PC-3 (cell line): ENCODE measurements at regions of chr20 and their contacts with region 1.

Region 1: GRCh38 chr20:10673988-10674711 is at the start of gene JAG1:
- DNase-seq: peak; percentile 99
- ATAC-seq: peak; percentile 56
- H3K4me3 ChIP-seq: peak within 1 kb of the TSS; percentile 95
- H3K27ac ChIP-seq: peak within 1 kb of the TSS; percentile 95
- H3K4me1 ChIP-seq: peaks cover 38% of the 10 kb centered on the region
- H3K27me3 ChIP-seq: no peaks in the 10 kb centered on the region
- CTCF ChIP-seq: no peak
- total RNA-seq, gene JAG1: 176 and 184 TPM in 2 replicates

Region 2: DNA sequence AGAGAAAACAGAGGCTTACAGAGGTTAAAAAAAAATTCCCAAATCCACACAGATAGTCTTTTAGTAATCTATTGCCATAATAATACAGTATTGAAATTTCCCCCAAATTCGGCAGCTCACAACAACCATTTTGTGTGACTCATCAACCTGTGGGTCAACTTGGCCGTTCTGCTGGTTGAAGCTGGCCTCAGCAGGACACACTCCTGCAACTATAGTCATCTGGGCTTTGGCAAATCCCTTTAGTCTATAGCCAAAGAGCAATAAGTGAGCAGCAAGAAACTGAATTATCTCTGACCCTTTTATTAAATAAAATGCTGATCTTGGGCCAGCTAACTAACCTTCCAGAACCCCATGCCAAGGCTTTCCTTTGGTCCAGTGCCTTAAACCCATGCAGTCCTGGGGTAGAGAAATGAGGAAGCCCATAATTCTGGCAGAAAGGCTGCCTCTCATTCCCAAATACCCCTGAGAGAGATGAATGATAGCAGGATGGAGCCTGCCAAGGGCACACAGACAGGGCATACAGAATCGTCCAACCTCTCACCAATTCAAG is 472.8 kb before region 1 on chr20:
- CTCF ChIA-PET with region 1: no interaction called
- POLR2A ChIA-PET with region 1: no interaction called
- intact Hi-C with region 1: no loop called
- DNase-seq: no peak
- ATAC-seq: no peak
- H3K4me3 ChIP-seq: no peak overlapping the region
- H3K27ac ChIP-seq: no peak overlapping the region
- H3K4me1 ChIP-seq: no peaks in the 10 kb centered on the region
- H3K27me3 ChIP-seq: peaks cover 41% of the 10 kb centered on the region
- CTCF ChIP-seq: no peak

Region 3: DNA sequence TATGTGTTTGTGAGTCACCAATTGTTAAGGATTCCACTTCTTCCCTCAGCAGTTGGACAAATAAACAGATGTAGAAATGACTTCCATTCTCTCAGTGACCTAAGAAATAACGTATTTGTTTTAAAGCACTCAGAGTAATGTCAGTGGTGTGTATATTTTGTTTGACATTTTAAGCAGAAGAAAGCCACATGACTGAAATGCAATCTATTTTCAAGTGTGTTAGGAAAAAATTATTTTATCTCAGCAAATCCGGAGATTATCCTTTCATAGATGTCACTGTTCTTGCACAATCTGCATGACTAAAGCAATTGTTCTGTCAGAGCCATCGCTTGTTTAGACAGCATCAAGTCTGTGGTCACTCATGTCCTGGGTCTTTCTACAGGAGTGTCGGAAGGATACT is 77.4 kb before region 1 on chr20:
- CTCF ChIA-PET with region 1: interaction called, 3 read pairs
- POLR2A ChIA-PET with region 1: interaction called, 6 read pairs
- intact Hi-C with region 1: loop called (anchors 5 kb)
- DNase-seq: peak; percentile 87
- ATAC-seq: 0 out of 2 replicates have a peak, but pooled peaks have one; percentile 9
- H3K4me3 ChIP-seq: no peak overlapping the region
- H3K27ac ChIP-seq: peak overlapping the region; percentile 95
- H3K4me1 ChIP-seq: peaks cover 80% of the 10 kb centered on the region
- H3K27me3 ChIP-seq: no peaks in the 10 kb centered on the region
- CTCF ChIP-seq: no peak

Region 4: GRCh38 chr20:10774357-10774943 is 100.3 kb after region 1 on chr20:
- CTCF ChIA-PET with region 1: no interaction called
- POLR2A ChIA-PET with region 1: interaction called, 23 read pairs
- intact Hi-C with region 1: no loop called
- DNase-seq: no peak
- ATAC-seq: no peak
- H3K4me3 ChIP-seq: no peak overlapping the region
- H3K27ac ChIP-seq: no peak overlapping the region
- H3K4me1 ChIP-seq: peaks cover 22% of the 10 kb centered on the region
- H3K27me3 ChIP-seq: no peaks in the 10 kb centered on the region
- CTCF ChIP-seq: no peak

Region 5: DNA sequence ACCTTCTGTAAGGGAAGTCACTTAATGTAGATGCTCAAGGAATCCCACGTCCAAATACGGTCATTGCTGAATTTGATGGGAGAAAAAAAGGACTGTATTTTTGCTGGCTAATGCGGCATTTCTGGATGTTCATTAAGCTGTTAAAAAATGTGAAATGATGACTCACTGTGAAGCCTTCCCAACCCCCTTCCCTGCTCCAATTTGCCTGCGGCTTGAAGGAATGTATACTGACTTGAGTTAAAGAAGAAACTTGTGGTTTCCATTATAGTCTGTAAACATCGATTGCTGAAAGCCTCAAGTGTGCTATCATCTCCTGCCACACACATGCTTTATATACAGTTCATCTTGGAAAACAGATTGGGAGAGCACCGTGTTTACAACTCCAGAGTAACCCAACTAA is 248.8 kb after region 1 on chr20:
- CTCF ChIA-PET with region 1: interaction called, 3 read pairs
- POLR2A ChIA-PET with region 1: no interaction called
- intact Hi-C with region 1: loop called (anchors 2 kb)
- DNase-seq: peak; percentile 97
- ATAC-seq: peak; percentile 79
- H3K4me3 ChIP-seq: peak overlapping the region; percentile 23; the same call in 1 of the 2 replicates
- H3K27ac ChIP-seq: peak overlapping the region; percentile 69
- H3K4me1 ChIP-seq: peaks cover 64% of the 10 kb centered on the region
- H3K27me3 ChIP-seq: no peaks in the 10 kb centered on the region
- CTCF ChIP-seq: no peak

Region 6: DNA sequence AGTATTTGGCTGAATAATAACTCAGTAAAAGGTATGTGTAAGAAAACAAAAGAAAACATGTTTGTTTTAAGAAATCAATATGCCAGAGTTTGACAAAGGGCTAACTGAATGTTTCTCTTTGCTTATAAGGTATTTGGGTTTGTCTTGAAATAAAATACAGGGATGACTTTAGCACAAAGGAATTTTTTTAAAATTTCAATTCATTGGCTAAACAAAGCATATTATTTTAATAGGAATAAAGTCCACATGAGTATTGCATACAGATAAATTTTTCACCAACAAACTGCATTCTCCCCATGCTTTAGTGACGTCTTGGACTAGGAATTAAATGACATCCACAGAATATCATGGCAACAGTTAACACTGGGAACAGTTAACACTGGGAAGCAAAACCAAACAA is 479.7 kb after region 1 on chr20:
- CTCF ChIA-PET with region 1: no interaction called
- POLR2A ChIA-PET with region 1: no interaction called
- intact Hi-C with region 1: loop called (anchors 2 kb)
- DNase-seq: peak; percentile 82
- ATAC-seq: peak; percentile 70
- H3K4me3 ChIP-seq: no peak overlapping the region
- H3K27ac ChIP-seq: peak overlapping the region; percentile 63
- H3K4me1 ChIP-seq: peaks cover 49% of the 10 kb centered on the region
- H3K27me3 ChIP-seq: no peaks in the 10 kb centered on the region
- CTCF ChIP-seq: no peak

Region 7: GRCh38 chr20:11454966-11455799 is 781.0 kb after region 1 on chr20:
- CTCF ChIA-PET with region 1: no interaction called
- POLR2A ChIA-PET with region 1: no interaction called
- intact Hi-C with region 1: loop called (anchors 10 kb)
- DNase-seq: peak; percentile 97
- ATAC-seq: peak; percentile 80
- H3K4me3 ChIP-seq: peak overlapping the region; percentile 24; the same call in 1 of the 2 replicates
- H3K27ac ChIP-seq: peak overlapping the region; percentile 75
- H3K4me1 ChIP-seq: peaks cover 44% of the 10 kb centered on the region
- H3K27me3 ChIP-seq: no peaks in the 10 kb centered on the region
- CTCF ChIP-seq: no peak